ENCODE measurements at regions of chr6 and their contacts with region 1.

Region 1: DNA sequence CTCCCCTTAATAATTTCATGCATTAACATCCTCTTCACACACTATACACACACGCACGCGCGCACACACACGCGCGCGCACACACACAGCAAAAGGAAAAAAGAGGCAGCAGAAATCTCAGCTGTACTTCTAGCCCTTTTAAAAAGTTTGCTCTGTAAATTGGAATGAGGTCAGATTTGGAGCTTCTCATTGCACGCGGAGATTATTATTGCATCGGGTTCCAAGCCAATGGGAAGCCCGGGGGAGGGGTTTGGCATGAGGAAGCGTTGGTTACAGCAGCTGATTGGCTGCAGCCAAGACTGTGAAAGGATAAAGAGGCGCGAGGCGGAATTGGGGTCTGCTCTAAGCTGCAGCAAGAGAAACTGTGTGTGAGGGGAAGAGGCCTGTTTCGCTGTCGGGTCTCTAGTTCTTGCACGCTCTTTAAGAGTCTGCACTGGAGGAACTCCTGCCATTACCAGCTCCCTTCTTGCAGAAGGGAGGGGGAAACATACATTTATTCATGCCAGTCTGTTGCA is at the start of gene SOX4:
- DNase-seq: peak; percentile 97
- H3K4me3 Mint-ChIP-seq: no peak within 1 kb of the TSS
- H3K27ac Mint-ChIP-seq: no peak within 1 kb of the TSS
- H3K4me1 Mint-ChIP-seq: no peaks in the 10 kb centered on the region
- H3K27me3 Mint-ChIP-seq: no peaks in the 10 kb centered on the region
- CTCF ChIP-seq: no peak
- total RNA-seq, gene SOX4: 12.8 and 12.9 TPM in 2 replicates

Region 2: GRCh38 chr6:20291764-20292580 is 1301.5 kb before region 1 on chr6:
- CTCF ChIA-PET with region 1: interaction called, 3 read pairs
- POLR2A ChIA-PET with region 1: no interaction called
- intact Hi-C with region 1: loop called (anchors 5 kb)
- DNase-seq: peak; percentile 90
- H3K4me3 Mint-ChIP-seq: no peak overlapping the region
- H3K27ac Mint-ChIP-seq: no peak overlapping the region
- H3K4me1 Mint-ChIP-seq: no peaks in the 10 kb centered on the region
- H3K27me3 Mint-ChIP-seq: peaks cover 17% of the 10 kb centered on the region
- CTCF ChIP-seq: peak; percentile 81

Region 3: GRCh38 chr6:21033575-21034026 is 559.9 kb before region 1 on chr6:
- CTCF ChIA-PET with region 1: interaction called, 3 read pairs
- POLR2A ChIA-PET with region 1: interaction called, 16 read pairs
- intact Hi-C with region 1: no loop called
- DNase-seq: peak; percentile 90
- H3K4me3 Mint-ChIP-seq: peak overlapping the region; percentile 49
- H3K27ac Mint-ChIP-seq: peak overlapping the region; percentile 72
- H3K4me1 Mint-ChIP-seq: peaks cover 16% of the 10 kb centered on the region
- H3K27me3 Mint-ChIP-seq: no peaks in the 10 kb centered on the region
- CTCF ChIP-seq: no peak

Region 4: GRCh38 chr6:21653905-21654304 is 60.4 kb after region 1 on chr6:
- CTCF ChIA-PET with region 1: no interaction called
- POLR2A ChIA-PET with region 1: no interaction called
- intact Hi-C with region 1: no loop called
- DNase-seq: no peak
- H3K4me3 Mint-ChIP-seq: no peak overlapping the region
- H3K27ac Mint-ChIP-seq: no peak overlapping the region
- H3K4me1 Mint-ChIP-seq: no peaks in the 10 kb centered on the region
- H3K27me3 Mint-ChIP-seq: no peaks in the 10 kb centered on the region
- CTCF ChIP-seq: no peak

Region 5: GRCh38 chr6:21742238-21742660 is 148.8 kb after region 1 on chr6:
- CTCF ChIA-PET with region 1: interaction called, 3 read pairs
- POLR2A ChIA-PET with region 1: interaction called, 15 read pairs
- intact Hi-C with region 1: loop called (anchors 5 kb)
- DNase-seq: peak; percentile 96
- H3K4me3 Mint-ChIP-seq: peak overlapping the region; percentile 36
- H3K27ac Mint-ChIP-seq: peak overlapping the region; percentile 94
- H3K4me1 Mint-ChIP-seq: peaks cover 46% of the 10 kb centered on the region
- H3K27me3 Mint-ChIP-seq: no peaks in the 10 kb centered on the region
- CTCF ChIP-seq: no peak

Region 6: DNA sequence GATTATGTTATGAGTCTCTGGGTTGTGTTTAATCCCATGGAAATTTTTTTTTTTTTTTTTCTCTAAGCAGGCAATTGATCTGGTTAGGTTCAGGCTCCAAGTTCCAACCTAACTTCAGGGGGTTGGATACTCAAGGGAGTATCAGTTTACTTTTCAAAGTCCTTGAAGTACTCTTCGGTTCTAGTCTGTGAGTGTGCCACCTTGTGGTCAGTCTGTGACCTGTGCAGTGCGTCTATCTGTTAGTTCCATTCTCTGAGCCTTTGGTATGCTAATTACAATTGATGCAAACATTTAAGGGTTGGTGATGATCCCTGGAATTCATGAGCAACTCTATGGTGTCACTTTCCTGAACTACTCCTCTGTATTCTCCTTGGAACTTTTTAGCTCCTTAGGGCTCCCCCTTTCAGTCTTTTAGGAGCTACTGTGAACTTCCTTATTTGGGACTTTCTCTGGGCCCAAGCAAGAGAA is 342.1 kb after region 1 on chr6:
- CTCF ChIA-PET with region 1: interaction called, 6 read pairs
- POLR2A ChIA-PET with region 1: no interaction called
- intact Hi-C with region 1: loop called (anchors 1 kb)
- DNase-seq: peak; percentile 62
- H3K4me3 Mint-ChIP-seq: no peak overlapping the region
- H3K27ac Mint-ChIP-seq: no peak overlapping the region
- H3K4me1 Mint-ChIP-seq: no peaks in the 10 kb centered on the region
- H3K27me3 Mint-ChIP-seq: no peaks in the 10 kb centered on the region
- CTCF ChIP-seq: peak; percentile 32

Region 7: GRCh38 chr6:22471132-22471690 is 877.7 kb after region 1 on chr6:
- CTCF ChIA-PET with region 1: interaction called, 3 read pairs
- POLR2A ChIA-PET with region 1: interaction called, 3 read pairs
- intact Hi-C with region 1: loop called (anchors 5 kb)
- DNase-seq: peak; percentile 81
- H3K4me3 Mint-ChIP-seq: peak overlapping the region; percentile 21
- H3K27ac Mint-ChIP-seq: peak overlapping the region; percentile 79
- H3K4me1 Mint-ChIP-seq: peaks cover 15% of the 10 kb centered on the region
- H3K27me3 Mint-ChIP-seq: no peaks in the 10 kb centered on the region
- CTCF ChIP-seq: peak; percentile 15

Region 8: GRCh38 chr6:23174781-23175361 is 1581.4 kb after region 1 on chr6:
- CTCF ChIA-PET with region 1: no interaction called
- POLR2A ChIA-PET with region 1: interaction called, 3 read pairs
- intact Hi-C with region 1: loop called (anchors 10 kb)
- DNase-seq: peak; percentile 85
- H3K4me3 Mint-ChIP-seq: peak overlapping the region; percentile 55
- H3K27ac Mint-ChIP-seq: peak overlapping the region; percentile 89
- H3K4me1 Mint-ChIP-seq: peaks cover 29% of the 10 kb centered on the region
- H3K27me3 Mint-ChIP-seq: no peaks in the 10 kb centered on the region
- CTCF ChIP-seq: no peak